Adrenal gland (tissue), 19 donors: ENCODE measurements at regions of chr1 and their contacts with region 1.

Region 1: GRCh38 chr1:245045087-245045881 is 109.5 kb upstream of the KIF26B start:
- DNase-seq: peak in 3 of 7 donors; percentile 13 to 59 (median 23)
- H3K4me3 ChIP-seq: no peak overlapping the region
- H3K27ac ChIP-seq: no peak overlapping the region
- H3K4me1 ChIP-seq: peaks cover 0 to 8% of the 10 kb centered on the region in 2 donors
- H3K27me3 ChIP-seq: no peaks in the 10 kb centered on the region
- CTCF ChIP-seq: no peak
- POLR2A ChIP-seq: no peak

Region 2: DNA sequence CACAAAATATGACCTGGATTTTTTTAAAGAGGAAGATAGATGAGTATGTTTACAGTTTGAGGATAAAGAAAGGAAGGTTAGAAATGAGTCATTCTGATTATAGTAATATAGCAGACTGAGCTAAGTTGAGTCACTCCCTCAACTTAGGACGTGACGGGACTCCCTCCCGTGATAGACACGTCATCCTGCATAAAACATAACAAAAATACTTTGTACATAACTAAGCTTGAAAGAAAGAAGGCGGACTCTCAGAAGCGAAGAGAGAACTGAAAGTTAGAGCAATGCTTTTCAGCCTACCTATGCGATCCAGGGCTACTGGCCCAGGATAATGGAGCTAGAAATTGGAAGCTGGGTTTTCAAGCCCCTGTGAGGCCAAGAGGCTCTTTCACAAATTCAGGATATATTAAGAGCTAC is 445.3 kb before region 1 on chr1:
- intact Hi-C with region 1: loop called in 1 of 2 experiments (anchors 10 kb)
- DNase-seq: peak; percentile 60 to 78 (median 72)
- H3K4me3 ChIP-seq: peak overlapping the region in 1 of 4 donors; percentile 32
- H3K27ac ChIP-seq: peak overlapping the region in 3 of 5 donors; percentile 62 to 79 (median 73)
- H3K4me1 ChIP-seq: no peaks in the 10 kb centered on the region
- H3K27me3 ChIP-seq: no peaks in the 10 kb centered on the region
- CTCF ChIP-seq: no peak
- POLR2A ChIP-seq: peak in 1 of 2 donors; percentile 86

Region 3: GRCh38 chr1:244796718-244797406 is 248.4 kb before region 1 on chr1:
- intact Hi-C with region 1: loop called (anchors 5 kb)
- DNase-seq: peak; percentile 43 to 92 (median 71)
- H3K4me3 ChIP-seq: no peak overlapping the region
- H3K27ac ChIP-seq: no peak overlapping the region
- H3K4me1 ChIP-seq: peaks cover 3 to 6% of the 10 kb centered on the region in 2 donors
- H3K27me3 ChIP-seq: no peaks in the 10 kb centered on the region
- CTCF ChIP-seq: peak; percentile 90 to 96 (median 94)
- POLR2A ChIP-seq: no peak

Region 4: DNA sequence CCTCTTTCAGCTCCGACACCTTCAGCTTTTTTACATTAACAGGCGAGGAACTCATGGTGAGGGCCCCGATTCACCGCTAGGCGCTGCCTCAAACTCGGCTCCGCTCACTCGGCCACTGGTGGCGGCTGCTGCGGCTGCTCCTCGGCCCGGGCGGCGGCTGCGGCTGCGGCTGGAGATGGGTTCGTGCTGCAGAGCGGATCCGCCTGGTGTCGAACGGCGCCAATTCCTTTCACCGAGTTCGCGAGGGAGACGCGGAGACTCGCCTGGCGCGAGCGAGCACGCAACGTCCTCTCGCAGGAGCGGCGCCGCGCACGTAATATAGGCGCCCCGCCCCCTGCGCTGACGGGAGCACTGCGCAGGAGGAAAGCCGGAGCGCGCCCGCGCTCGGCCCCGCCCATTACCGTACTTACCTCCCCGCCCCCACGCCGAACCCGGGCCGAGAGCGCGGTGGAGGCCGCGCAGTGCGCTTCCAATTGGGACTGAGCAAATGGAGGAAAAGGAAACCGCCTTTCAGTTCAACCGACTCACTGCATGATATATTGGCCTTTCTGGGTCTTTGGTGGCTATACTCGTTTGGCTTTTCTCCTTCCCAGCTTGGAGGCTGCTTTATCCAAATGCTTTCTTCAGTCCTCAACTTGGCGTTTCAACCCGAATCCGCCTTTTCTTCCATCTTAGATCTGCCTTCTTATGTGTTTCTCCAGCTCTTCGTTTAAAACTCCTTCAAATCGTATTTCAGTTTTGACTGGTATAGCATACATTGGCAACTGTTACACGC is 180.8 kb before region 1 on chr1 and contains the start of gene HNRNPU:
- intact Hi-C with region 1: loop called in 1 of 2 experiments (anchors 10 kb)
- DNase-seq: peak; percentile 95 to 98 (median 97)
- H3K4me3 ChIP-seq: peak within 1 kb of the TSS; percentile 72 to 99 (median 90)
- H3K27ac ChIP-seq: peak within 1 kb of the TSS; percentile 98 to 100 (median 100)
- H3K4me1 ChIP-seq: peaks cover 22 to 32% of the 10 kb centered on the region in 2 donors
- H3K27me3 ChIP-seq: no peaks in the 10 kb centered on the region
- CTCF ChIP-seq: peak in 5 of 6 experiments; percentile 32 to 61 (median 59)
- POLR2A ChIP-seq: peak; percentile 96 to 99
- total RNA-seq, gene HNRNPU: 192 to 326 (median 273) TPM

Region 5: DNA sequence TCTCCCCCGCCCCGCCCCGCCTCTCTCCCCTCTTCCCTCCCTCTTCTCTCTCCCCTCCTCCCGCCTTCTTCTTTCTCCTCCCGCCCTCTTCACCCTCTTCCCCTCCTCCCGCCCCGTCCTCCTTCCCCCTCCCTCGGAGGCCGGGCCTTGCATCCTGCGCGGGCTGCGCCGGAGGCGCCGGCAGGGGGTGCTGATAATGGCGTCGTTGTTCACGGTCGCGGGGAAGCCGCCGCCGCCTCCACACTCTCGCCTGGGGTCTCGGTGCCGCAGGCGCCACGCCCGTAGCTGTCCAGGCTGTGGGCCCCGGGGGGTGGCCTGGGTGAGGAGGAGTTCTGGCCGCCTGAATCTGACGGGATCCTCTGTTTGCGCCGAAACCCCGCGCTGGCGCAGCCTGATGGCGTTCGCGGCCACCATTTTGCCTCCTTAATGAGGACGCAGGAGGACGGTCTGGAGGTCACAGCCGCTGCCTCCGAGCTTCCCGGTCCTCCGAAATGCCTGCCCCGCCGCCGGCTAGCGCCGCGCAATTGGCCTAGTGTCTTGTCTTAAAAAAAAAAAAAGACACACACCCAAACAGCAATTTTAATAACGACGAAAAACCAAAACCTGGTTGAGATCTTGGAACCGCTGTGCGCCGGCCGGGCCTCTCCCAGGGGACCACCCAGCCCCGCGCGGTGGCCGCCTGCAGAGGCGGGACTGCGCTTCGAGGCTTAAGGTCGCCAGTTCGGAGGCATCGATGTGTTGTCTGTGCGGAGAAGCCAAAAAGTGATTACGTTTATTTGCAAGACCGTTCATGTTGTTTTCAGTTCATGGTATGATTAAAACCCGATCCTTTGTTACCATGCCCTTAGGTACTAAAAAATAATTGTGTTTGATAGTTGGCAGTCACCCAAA is 74.4 kb before region 1 on chr1:
- intact Hi-C with region 1: loop called in 1 of 2 experiments (anchors 5 kb)
- DNase-seq: peak; percentile 93 to 97 (median 95)
- H3K4me3 ChIP-seq: peak overlapping the region; percentile 3 to 93 (median 56)
- H3K27ac ChIP-seq: peak overlapping the region; percentile 88 to 100 (median 99)
- H3K4me1 ChIP-seq: peaks cover 11 to 19% of the 10 kb centered on the region in 2 donors
- H3K27me3 ChIP-seq: no peaks in the 10 kb centered on the region
- CTCF ChIP-seq: peak; percentile 16 to 80 (median 66)
- POLR2A ChIP-seq: peak; percentile 78 to 82

Region 6: DNA sequence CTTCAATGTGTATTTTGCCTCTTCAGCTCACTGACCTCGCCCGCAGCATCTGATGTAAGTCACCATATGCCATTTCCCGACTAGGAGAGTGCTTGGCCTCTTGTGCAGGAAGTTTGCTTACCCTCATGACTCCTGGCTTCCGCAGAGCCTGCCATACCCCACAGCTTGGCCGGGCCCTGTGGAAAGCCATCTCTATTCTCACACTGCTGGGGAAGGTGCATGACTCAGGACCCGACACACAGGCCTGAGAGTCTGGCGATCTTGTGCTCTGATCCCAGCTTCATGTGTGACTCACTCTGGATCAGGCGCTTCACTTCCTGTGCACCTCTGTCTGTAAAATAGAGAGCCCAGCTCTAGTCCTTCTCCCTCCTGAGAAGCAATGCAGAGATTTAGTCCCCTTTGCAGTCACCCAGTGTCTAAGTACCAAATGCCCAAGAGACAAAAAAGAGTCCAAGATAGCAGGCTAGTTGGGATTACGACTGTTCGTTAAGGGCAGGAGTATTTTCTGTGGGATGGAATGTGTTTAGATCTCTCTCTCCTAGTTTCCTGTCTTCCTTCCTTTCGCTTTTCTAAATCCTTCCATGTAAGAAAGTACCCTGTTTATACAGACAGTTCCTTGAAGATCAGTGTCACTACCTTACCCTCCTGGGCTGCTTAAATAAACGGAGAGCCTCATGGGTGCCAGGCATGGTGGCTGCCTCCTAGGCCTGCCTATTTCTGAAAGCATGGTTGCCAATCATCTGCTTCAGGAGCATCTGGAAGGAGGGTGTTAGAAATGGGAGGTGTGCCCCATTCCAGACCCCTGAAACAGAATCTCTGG is 46.7 kb after region 1 on chr1:
- intact Hi-C with region 1: no loop called
- DNase-seq: peak; percentile 65 to 94 (median 90)
- H3K4me3 ChIP-seq: no peak overlapping the region
- H3K27ac ChIP-seq: peak overlapping the region in 4 of 5 donors; percentile 1 to 89 (median 74)
- H3K4me1 ChIP-seq: peaks cover 0 to 16% of the 10 kb centered on the region in 2 donors
- H3K27me3 ChIP-seq: no peaks in the 10 kb centered on the region
- CTCF ChIP-seq: no peak
- POLR2A ChIP-seq: peak in 1 of 2 donors; percentile 59